Mammary epithelial cell (primary cell): ENCODE measurements at regions of chr9 and their contacts with region 1.

Region 1: DNA sequence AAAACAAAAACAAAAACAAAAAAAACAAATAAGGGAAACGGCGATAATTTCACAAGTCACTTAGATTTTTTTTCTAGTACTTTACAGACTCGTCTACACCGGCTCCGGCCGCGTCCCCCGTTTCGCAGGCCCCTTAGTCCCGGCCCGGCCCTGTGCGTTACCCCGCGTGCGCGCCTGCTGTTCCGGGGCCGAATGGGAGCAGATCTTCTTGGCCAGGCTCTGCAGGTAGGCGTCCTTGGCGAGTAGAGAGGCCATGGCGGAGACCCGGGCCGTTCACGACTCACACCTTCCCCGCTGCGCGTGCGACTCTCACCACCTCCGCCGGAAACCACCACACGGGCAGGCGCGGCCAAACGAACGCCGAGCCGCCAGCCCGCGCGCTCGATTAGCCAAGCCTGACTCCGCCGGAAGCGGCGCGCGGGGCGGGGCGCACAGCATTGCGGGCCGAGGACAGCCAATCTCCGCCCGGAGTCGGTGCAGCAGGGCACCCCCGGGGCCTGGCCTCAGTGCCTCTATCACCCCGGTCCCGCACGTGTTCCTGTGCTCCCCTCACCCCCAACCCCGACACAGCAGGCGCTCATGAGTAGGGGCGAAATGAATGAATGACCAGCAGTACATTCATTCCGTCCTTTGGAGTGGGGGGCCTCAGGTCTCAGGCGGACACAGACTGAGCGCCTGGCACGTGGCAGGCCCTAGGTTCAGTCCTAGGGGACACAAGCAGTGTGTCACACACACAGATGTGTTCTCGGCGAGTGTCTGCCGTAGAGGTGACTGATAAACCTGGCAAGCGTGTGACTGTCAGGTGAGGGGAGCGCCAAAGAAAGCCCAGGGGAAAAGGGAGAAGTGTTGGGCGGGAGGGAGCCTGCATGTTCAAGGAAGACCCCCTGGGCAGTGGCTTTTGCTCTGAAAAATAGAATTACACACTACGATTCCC is at the start of gene SURF6:
- DNase-seq: peak; percentile 91
- H3K4me3 ChIP-seq: peak within 1 kb of the TSS; percentile 77 to 88 (median 81)
- H3K27ac ChIP-seq: peak within 1 kb of the TSS; percentile 58
- H3K4me1 ChIP-seq: peaks cover 18% of the 10 kb centered on the region
- H3K27me3 ChIP-seq: no peaks in the 10 kb centered on the region
- CTCF ChIP-seq: no peak
- total RNA-seq, gene SURF6: 6.8 to 27.2 TPM

Region 2: GRCh38 chr9:133075925-133076630 is 260.1 kb before region 1 on chr9:
- CTCF ChIA-PET with region 1: no interaction called
- dilution Hi-C with region 1: loop called (anchors 10 kb)
- in situ Hi-C with region 1: no loop called
- intact Hi-C with region 1: no loop called
- DNase-seq: peak; percentile 64
- H3K4me3 ChIP-seq: no peak overlapping the region
- H3K27ac ChIP-seq: no peak overlapping the region
- H3K4me1 ChIP-seq: no peaks in the 10 kb centered on the region
- H3K27me3 ChIP-seq: no peaks in the 10 kb centered on the region
- CTCF ChIP-seq: no peak

Region 3: GRCh38 chr9:133170716-133171559 is 165.2 kb before region 1 on chr9:
- CTCF ChIA-PET with region 1: no interaction called
- dilution Hi-C with region 1: loop called (anchors 5 kb)
- in situ Hi-C with region 1: no loop called
- intact Hi-C with region 1: no loop called
- DNase-seq: no peak
- H3K4me3 ChIP-seq: no peak overlapping the region
- H3K27ac ChIP-seq: no peak overlapping the region
- H3K4me1 ChIP-seq: no peaks in the 10 kb centered on the region
- H3K27me3 ChIP-seq: peaks cover 2% of the 10 kb centered on the region
- CTCF ChIP-seq: no peak

Region 4: GRCh38 chr9:133347985-133348717 is 12.0 kb after region 1 on chr9 and contains the starts of genes MED22 and RPL7A:
- CTCF ChIA-PET with region 1: no interaction called
- dilution Hi-C with region 1: no loop called
- in situ Hi-C with region 1: no loop called
- intact Hi-C with region 1: loop called (anchors 1 kb)
- DNase-seq: peak; percentile 93
- H3K4me3 ChIP-seq: peak within 1 kb of the TSS; percentile 82 to 98 (median 87)
- H3K27ac ChIP-seq: peak within 1 kb of the TSS; percentile 89
- H3K4me1 ChIP-seq: peaks cover 17% of the 10 kb centered on the region
- H3K27me3 ChIP-seq: no peaks in the 10 kb centered on the region
- CTCF ChIP-seq: no peak
- total RNA-seq, gene MED22: 17.2 to 35.4 TPM
- total RNA-seq, gene RPL7A: 1,339 to 1,542 TPM

Region 5: DNA sequence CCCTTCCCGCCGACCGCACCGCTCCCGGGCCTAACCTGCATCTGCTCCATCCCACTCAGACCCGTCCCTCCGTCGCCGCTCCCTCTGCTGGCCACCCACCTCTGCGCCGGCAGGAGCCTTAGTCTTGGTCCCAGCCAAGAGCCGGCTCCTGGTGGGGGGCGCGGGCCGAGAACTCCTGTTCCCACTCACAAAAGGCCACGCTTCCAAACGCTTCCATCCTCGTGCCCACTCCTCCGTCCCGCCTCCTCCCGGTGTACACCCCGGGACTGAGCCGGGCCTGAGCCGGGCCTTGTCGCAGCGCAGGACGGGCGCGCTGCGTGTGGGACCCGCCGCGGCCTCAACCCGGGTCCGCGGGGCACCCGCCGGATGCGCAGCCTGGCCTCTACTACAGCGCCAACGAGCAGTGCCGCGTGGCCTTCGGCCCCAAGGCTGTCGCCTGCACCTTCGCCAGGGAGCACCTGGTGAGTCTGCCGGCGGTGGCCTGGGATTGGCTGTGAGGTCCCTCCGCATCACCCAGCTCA is 93.6 kb after region 1 on chr9:
- CTCF ChIA-PET with region 1: no interaction called
- dilution Hi-C with region 1: no loop called
- in situ Hi-C with region 1: no loop called
- intact Hi-C with region 1: no loop called
- DNase-seq: no peak
- H3K4me3 ChIP-seq: no peak overlapping the region
- H3K27ac ChIP-seq: no peak overlapping the region
- H3K4me1 ChIP-seq: no peaks in the 10 kb centered on the region
- H3K27me3 ChIP-seq: no peaks in the 10 kb centered on the region
- CTCF ChIP-seq: peak in 1 of 2 donors; percentile 26